Left cardiac atrium (tissue), 4 donors: ENCODE measurements at regions of chr6 and their contacts with region 1.

Region 1: GRCh38 chr6:71510057-71510713 is 221.6 kb downstream of the OGFRL1 start:
- DNase-seq: peak; percentile 39
- ATAC-seq: peak; percentile 74 to 88

Region 2: DNA sequence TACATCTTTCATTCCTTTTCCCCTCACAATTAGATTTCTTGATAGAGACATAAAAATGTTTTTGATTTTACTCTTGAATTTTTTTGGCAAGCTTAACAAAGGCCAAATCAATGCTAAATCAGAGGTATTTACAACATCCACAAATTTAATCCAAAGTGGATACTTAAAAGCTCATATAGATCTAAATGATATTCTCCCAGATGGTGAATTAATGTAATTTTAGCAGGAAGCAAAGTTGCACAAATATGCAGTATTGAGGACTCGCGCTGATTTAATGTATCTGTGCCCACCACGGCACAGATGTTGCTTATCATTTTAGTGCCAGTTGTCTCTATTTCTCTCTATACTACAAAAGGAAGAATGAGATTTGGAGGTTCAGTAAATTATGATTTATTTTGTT is 1476.4 kb before region 1 on chr6:
- intact Hi-C with region 1: no loop called
- DNase-seq: no peak
- ATAC-seq: no peak

Region 3: GRCh38 chr6:71091173-71091572 is 419.0 kb before region 1 on chr6:
- intact Hi-C with region 1: no loop called
- DNase-seq: no peak
- ATAC-seq: no peak

Region 4: DNA sequence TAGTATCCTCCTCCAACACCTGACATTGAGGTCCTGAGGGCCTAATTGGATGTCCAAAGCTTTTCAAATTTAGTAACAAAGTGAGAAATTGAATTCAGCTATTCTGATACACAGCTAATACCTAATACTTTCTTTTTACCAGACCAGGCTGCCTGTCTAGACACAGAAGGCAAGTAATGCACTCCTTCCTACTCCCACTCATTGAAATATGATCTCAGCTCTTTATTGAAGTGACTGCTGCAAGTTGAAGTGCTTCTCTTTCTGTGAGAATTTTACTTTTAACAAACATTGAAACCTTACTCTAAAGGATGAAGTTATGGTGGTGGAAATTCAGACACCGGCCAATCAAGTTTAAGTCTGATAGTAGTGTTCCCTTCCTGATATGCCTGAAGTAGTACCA is 312.4 kb before region 1 on chr6:
- intact Hi-C with region 1: loop called in 1 of 2 experiments (anchors 5 kb)
- DNase-seq: no peak
- ATAC-seq: peak in 1 of 2 donors; percentile 55

Region 5: DNA sequence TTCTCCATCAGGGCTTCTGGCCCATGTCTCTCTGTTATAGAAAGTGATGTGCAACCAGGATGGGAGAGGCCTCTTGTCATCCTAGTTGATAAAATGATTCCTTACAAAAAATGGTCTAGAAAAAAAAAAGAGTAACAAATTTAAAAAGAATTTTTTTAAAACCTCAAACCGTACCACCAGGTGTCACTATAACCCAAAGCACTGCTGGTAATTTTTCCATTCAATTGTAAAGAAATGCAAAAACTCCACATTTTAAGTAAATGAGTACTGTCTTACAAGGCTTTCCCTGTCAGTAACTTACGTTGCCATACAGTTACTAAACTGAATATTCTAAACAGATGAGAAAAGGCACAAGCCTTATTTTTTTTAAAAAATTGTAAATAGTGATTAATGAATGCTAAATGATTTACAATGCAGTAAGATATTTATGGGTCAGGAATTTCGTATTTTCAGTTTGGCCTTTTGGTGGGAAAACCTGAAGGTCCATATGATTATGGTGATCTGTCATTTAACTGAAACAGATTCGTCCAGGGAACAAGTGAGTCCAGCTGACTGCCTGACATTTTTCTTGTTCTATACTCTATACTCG is 126.2 kb before region 1 on chr6:
- intact Hi-C with region 1: loop called (anchors 2 to 10 kb)
- DNase-seq: no peak
- ATAC-seq: no peak

Region 6: DNA sequence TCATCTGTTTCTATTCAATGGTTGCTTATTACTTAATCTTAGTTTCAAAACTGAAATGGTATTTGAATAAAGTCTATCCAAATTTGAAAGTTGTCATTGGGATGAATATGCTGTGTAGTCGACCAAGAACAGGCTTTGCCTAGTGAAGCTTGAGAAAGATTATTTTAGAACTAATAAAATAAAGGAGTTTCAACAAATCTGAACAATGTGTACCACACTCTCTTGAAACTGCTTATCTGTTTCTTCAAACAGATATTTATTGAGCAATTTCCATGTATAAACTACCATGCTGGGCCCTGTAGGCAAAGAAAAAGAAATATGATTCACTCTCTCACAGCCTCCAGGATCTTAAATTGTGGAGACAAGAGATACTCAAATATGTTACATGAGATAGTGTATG is 47.1 kb before region 1 on chr6:
- intact Hi-C with region 1: no loop called
- DNase-seq: no peak
- ATAC-seq: peak in 1 of 2 donors; percentile 47

Region 7: GRCh38 chr6:71478834-71479541 is 31.2 kb before region 1 on chr6:
- intact Hi-C with region 1: no loop called
- DNase-seq: no peak
- ATAC-seq: peak; percentile 57 to 66